Calu3 (cell line): ENCODE measurements at regions of chr1 and their contacts with region 1.

Region 1: DNA sequence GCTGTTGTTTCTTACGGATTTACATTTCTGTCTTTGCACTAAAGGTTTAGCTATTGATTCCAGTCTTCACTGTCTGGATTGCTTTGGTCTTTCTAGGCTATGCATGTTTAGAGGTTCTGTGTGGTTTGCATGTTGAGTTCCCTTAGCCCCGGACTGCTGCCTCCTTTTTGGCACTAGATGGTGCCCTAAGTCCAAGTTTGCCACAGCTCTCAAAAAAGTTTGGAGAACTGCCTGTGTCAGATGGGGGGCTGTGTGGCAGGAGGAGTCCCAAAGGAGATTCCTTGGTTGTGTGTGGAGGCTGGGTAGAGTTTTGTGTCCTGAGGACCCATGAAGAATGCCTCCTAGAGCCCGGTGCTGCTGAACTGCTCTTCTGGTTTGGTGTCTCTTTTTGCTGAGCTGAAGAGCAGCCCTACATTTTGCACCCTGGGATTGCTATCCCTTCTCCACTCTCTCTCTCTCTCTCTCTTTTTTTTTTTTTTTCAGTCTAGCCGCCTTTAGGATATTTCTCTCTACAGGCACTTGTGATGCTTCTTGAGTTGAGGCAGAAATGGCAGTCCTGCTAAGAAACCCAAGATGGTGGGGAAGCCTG is 74.4 kb downstream of the PTGS2 start:
- DNase-seq: peak; percentile 76
- H3K4me3 Mint-ChIP-seq: no peak overlapping the region
- H3K27ac Mint-ChIP-seq: peak overlapping the region; percentile 51
- H3K4me1 Mint-ChIP-seq: peaks cover 26% of the 10 kb centered on the region
- H3K27me3 Mint-ChIP-seq: no peaks in the 10 kb centered on the region
- CTCF ChIP-seq: peak; percentile 89

Region 2: DNA sequence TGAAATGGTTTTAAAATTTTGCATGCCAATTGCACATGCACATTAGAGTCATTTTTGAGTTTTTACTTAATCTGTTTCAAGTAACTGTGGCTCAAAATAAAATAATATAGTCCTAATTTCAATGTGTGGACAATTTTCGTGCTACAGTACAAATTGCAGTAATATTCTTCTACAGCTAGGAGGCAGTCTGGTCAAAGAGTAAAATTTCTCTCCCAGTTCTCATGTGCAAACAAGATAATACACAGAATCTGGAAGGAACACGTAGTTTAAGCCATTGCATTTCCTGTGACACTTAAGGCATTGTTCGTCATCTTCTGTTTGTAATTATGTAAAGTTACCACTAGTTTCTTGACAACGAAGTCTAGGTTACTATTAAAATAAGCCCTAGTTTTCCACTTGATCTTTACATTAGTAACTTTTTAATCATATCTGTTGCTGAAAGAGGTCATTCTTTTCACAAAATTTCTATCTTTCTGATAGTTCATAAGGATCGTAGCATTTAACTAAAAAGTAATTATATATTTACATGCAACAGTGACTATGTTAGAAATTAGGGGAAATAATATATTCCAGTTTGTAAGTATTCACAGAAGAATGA is 201.3 kb before region 1 on chr1:
- CTCF ChIA-PET with region 1: no interaction called
- intact Hi-C with region 1: loop called (anchors 5 kb)
- DNase-seq: peak; percentile 13
- H3K4me3 Mint-ChIP-seq: no peak overlapping the region
- H3K27ac Mint-ChIP-seq: no peak overlapping the region
- H3K4me1 Mint-ChIP-seq: no peaks in the 10 kb centered on the region
- H3K27me3 Mint-ChIP-seq: no peaks in the 10 kb centered on the region
- CTCF ChIP-seq: peak; percentile 59

Region 3: GRCh38 chr1:186985889-186986491 is 380.1 kb after region 1 on chr1:
- CTCF ChIA-PET with region 1: interaction called, 4 read pairs
- intact Hi-C with region 1: loop called (anchors 1 kb)
- DNase-seq: peak; percentile 35
- H3K4me3 Mint-ChIP-seq: no peak overlapping the region
- H3K27ac Mint-ChIP-seq: peak overlapping the region; percentile 37
- H3K4me1 Mint-ChIP-seq: peaks cover 19% of the 10 kb centered on the region
- H3K27me3 Mint-ChIP-seq: no peaks in the 10 kb centered on the region
- CTCF ChIP-seq: peak; percentile 60